A549 (cell line): ENCODE measurements at regions of chr14 and their contacts with region 1.

Region 1: GRCh38 chr14:92106143-92106926 is at the start of gene ATXN3:
- DNase-seq: peak; percentile 98 to 99
- ATAC-seq: peak; percentile 91 to 96
- H3K4me3 ChIP-seq: peak within 1 kb of the TSS; percentile 75
- H3K27ac ChIP-seq: peak within 1 kb of the TSS; percentile 89 to 96
- H3K4me1 ChIP-seq: peaks cover 23% of the 10 kb centered on the region
- CTCF ChIP-seq: peak; percentile 74
- EP300 ChIP-seq: no peak
- POLR2A ChIP-seq: peak; percentile 36
- RAD21 ChIP-seq: 0 out of 5 replicates have a peak, but pooled peaks of 1 of the 2 experiments have one; percentile 28
- polyA plus RNA-seq, gene ATXN3: 37.1 and 41.8 TPM in 2 replicates

Region 2: GRCh38 chr14:92039719-92040430 is 66.5 kb before region 1 on chr14 and contains the start of gene TRIP11:
- CTCF ChIA-PET with region 1: interaction called, 8 read pairs
- POLR2A ChIA-PET with region 1: interaction called, 12 read pairs
- DNase-seq: peak; percentile 93 to 94
- ATAC-seq: peak; percentile 98 to 99
- H3K4me3 ChIP-seq: peak within 1 kb of the TSS; percentile 71
- H3K27ac ChIP-seq: peak within 1 kb of the TSS; percentile 90 to 97
- H3K4me1 ChIP-seq: peaks cover 20% of the 10 kb centered on the region
- CTCF ChIP-seq: no peak
- EP300 ChIP-seq: no peak
- POLR2A ChIP-seq: peak; percentile 98
- RAD21 ChIP-seq: no peak
- polyA plus RNA-seq, gene TRIP11: 24.5 and 26.8 TPM in 2 replicates

Region 3: GRCh38 chr14:92088494-92088893 is 17.8 kb before region 1 on chr14:
- CTCF ChIA-PET with region 1: interaction called, 14 read pairs
- POLR2A ChIA-PET with region 1: interaction called, 7 read pairs
- DNase-seq: no peak
- ATAC-seq: no peak
- H3K4me3 ChIP-seq: no peak overlapping the region
- H3K27ac ChIP-seq: no peak overlapping the region
- H3K4me1 ChIP-seq: no peaks in the 10 kb centered on the region
- CTCF ChIP-seq: no peak
- EP300 ChIP-seq: no peak
- POLR2A ChIP-seq: no peak
- RAD21 ChIP-seq: no peak

Region 4: DNA sequence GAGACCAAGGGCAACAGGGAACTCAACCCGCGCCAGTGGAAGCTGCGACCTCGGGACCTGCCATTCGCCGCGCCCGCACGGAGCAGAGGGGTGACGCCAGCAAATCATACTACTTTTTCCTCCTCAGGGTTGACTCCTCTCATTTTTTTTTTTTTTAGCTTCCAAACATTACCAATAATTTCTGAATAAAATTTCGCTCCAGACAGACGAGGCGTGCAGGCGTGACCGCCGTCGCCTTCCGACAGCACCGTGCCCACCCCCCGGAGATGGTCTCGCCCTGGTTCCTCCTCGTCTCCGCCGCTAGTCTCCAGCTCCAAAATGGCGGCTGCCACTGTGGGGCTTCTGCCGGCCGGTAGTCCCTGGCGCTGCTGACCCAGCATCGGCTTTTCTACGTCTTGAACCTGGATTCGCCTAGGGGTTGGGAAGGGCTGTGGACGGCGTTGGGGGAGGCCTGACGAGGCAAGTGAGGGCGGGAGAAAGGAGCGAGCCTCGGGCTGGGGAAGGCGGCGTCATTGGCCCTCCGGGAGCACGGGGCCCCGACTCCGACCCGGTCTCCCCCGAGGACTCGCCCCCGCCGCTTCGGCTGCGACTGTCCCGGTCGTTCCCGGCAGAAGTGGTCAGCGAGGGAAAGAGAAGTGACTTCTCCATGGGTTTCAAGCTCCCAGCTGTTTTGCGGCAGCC is 15.5 kb after region 1 on chr14 and contains the starts of genes CPSF2 and NDUFB1:
- CTCF ChIA-PET with region 1: interaction called, 99 read pairs
- POLR2A ChIA-PET with region 1: interaction called, 60 read pairs
- DNase-seq: peak; percentile 79 to 96
- ATAC-seq: peak; percentile 94 to 96
- H3K4me3 ChIP-seq: peak within 1 kb of the TSS; percentile 94
- H3K27ac ChIP-seq: peak within 1 kb of the TSS; percentile 97 to 98
- H3K4me1 ChIP-seq: peaks cover 14% of the 10 kb centered on the region; the same call in 2 of the 3 replicates
- CTCF ChIP-seq: no peak
- EP300 ChIP-seq: no peak
- POLR2A ChIP-seq: peak; percentile 94
- RAD21 ChIP-seq: no peak
- polyA plus RNA-seq, gene CPSF2: 60.0 and 75.3 TPM in 2 replicates
- polyA plus RNA-seq, gene NDUFB1: 397 and 704 TPM in 2 replicates